ENCODE measurements at regions of chr4 and their contacts with region 1.

Region 1: GRCh38 chr4:151362404-151363164 is 37.2 kb upstream of the SH3D19 start:
- DNase-seq: peak; percentile 78

Region 2: DNA sequence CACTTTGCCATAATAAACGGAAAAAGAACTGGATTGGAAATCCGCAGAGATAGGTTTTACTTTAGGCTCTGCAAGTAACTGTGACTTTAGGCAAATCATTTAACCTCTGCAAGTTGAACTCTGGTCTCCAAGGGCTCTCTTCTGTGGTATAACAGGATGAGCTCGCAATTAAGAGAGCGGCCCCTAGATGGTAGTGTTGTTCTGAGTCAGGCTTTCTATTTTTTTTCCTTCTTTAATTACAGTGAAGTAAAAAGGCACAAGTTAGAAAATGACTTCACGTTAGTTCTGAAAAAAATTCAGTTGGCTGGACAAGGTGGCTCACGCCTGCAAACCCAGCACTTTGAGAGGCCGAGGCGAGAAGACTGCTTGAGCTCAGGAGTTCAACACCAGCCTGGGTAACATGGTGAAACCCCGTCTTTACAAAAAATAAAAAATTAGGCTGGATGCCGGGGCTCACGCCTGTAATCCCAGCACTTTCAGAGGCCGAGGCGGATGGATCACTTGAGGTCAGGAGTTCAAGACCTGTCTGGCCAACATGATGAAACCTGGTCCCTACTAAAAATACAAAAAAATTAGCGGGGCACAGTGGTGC is 245.1 kb before region 1 on chr4:
- intact Hi-C with region 1: loop called (anchors 2 kb)
- DNase-seq: no peak

Region 3: DNA sequence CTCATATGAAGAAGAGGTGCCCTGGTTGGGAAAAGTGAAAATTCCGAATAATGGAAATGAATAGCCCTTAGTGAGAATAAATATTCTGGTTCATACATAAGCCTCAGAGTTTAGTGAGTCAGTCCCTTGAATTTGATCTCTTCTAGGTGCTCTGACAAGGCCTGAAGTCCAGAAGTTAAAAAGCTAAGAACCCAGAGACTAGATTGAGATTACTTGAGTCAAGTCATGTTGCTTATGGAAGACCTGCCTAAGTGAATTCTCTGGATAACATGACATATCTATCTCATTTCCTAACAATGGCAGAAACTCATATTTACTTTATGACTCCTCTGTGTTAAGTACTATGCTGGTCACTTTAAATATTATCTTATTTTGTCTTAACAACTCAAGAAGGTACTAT is 96.1 kb before region 1 on chr4:
- intact Hi-C with region 1: no loop called
- DNase-seq: no peak

Region 4: GRCh38 chr4:151276787-151277562 is 85.6 kb before region 1 on chr4 and contains the start of gene PRSS48:
- intact Hi-C with region 1: loop called (anchors 2 kb)
- DNase-seq: peak; percentile 78
- total RNA-seq, gene PRSS48: not detected

Region 5: GRCh38 chr4:151325111-151325948 is 37.3 kb before region 1 on chr4 and contains the start of gene SH3D19:
- intact Hi-C with region 1: loop called (anchors 5 kb)
- DNase-seq: peak; percentile 80
- total RNA-seq, gene SH3D19: 142 TPM

Region 6: DNA sequence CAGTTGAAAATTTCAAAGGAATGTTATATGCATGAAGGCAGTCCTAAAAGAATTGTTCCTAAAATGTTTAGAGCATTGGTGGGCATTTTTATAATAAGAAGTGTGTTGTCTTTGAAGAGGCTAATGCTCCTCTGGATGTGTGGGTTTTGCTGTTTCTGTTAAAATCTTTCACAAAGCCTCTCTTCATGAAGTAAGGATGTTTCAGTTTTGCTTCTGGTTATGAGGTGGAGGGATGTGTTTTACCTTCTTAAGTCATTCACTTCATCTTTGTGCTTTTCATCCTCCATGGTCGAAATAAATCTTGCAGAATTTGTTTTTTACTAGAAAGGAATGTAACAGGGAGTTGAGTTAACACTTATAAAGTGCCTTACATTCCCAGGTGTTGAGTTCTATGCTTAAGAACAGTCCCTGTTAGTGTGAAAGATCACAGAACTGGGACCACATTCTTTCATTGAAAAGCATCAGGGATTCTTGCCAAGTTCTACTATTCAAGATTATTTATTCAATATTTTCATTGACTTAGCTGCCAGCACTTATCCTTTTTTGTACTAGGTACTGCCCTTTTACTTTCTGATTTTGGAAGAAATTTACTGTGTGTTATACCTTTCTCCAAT is 67.5 kb after region 1 on chr4:
- intact Hi-C with region 1: no loop called
- DNase-seq: no peak

Region 7: DNA sequence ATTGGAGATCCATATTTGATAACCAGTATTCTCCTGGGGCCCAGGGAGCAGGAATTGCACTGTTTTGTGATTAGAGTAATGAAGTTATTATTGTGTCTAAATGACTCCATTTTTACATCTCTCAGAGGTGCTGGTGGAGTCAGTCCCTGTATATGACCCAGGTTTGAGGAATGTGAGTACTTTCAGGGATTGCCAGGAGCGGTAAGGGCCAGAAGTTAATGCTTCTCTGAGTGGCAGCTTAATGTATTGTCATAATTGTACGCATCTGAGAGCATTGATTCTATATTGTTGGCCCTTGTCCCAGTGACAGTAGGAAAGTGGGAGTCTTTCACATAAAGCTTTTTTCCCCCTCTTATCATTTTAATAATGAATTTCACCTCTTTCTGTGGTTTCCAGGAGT is 252.0 kb after region 1 on chr4:
- intact Hi-C with region 1: loop called (anchors 10 kb)
- DNase-seq: no peak

Measured in cardiac septum (tissue), 1 donor.